ENCODE measurements at regions of chr11 and their contacts with region 1.

Region 1: GRCh38 chr11:95790123-95790932 is at the start of gene CEP57:
- DNase-seq: peak; percentile 93 to 96
- ATAC-seq: peak; percentile 89 to 92
- H3K4me3 ChIP-seq: peak within 1 kb of the TSS; percentile 88 to 99 (median 96)
- H3K27ac ChIP-seq: peak within 1 kb of the TSS; percentile 95 to 98 (median 96)
- H3K4me1 ChIP-seq: peaks cover 19 to 26% of the 10 kb centered on the region in 2 donors
- H3K27me3 ChIP-seq: no peaks in the 10 kb centered on the region
- CTCF ChIP-seq: no peak
- POLR2A ChIP-seq: peak; percentile 50 to 59
- total RNA-seq, gene CEP57: 10.2 to 20.5 (median 16.9) TPM

Region 2: DNA sequence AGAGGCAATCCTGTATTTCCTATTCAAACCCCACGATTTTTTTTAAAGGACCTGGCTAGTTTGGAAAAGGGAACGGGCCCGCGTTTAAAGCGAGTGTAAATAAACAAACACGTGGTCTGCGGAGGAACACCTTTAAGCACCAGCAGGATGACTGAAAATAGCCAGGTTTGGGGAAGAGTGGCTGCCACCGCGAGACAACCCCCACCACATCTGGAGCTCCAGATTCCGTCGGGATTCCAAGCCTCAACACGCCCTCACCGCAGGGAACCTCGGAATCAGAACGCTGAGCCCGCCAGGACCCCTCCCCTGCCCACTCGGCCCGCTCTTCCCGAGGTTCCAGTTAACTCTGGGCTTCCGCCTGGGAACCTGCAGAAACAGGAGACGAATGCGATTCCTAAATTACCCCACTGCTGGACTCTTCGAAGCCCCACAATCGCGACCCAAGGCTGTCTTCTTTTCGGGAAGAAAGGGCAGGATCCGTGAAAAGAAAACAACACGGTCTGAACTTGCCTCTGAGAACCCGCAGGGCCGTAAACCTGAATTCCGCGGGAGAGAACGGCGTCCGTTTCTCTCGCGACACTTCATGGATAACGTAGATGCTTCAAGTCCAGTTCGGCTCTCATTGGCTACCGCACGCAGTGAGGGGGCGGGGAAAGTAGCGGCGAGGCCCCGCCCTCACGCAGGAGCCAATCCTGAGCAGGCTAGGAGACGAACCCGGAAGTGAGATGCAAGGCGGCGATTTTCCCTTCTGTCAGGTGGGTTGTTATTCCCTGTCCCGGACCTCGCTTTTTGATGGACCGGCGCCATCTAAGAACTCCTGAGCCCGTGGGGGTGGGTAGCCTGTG is 1296.8 kb before region 1 on chr11 and contains the starts of genes ANKRD49 and MRE11:
- in situ Hi-C with region 1: loop called in 2 of 4 experiments (anchors 25 kb)
- intact Hi-C with region 1: no loop called
- DNase-seq: peak; percentile 96 to 98
- ATAC-seq: peak; percentile 100
- H3K4me3 ChIP-seq: peak within 1 kb of the TSS; percentile 80 to 94 (median 86)
- H3K27ac ChIP-seq: peak within 1 kb of the TSS; percentile 76 to 87 (median 82)
- H3K4me1 ChIP-seq: peaks cover 24 to 27% of the 10 kb centered on the region in 2 donors
- H3K27me3 ChIP-seq: no peaks in the 10 kb centered on the region
- CTCF ChIP-seq: no peak
- POLR2A ChIP-seq: peak; percentile 53 to 74
- total RNA-seq, gene ANKRD49: 9.0 to 21.1 (median 11.9) TPM
- total RNA-seq, gene MRE11: 5.3 to 12.3 (median 5.9) TPM

Region 3: GRCh38 chr11:95835768-95836488 is 45.6 kb after region 1 on chr11:
- in situ Hi-C with region 1: no loop called
- intact Hi-C with region 1: loop called (anchors 2 kb)
- DNase-seq: peak; percentile 19 to 57
- ATAC-seq: peak; percentile 92 to 99
- H3K4me3 ChIP-seq: no peak overlapping the region
- H3K27ac ChIP-seq: peak overlapping the region in 3 of 4 donors; percentile 5 to 22 (median 15)
- H3K4me1 ChIP-seq: peaks cover 0 to 8% of the 10 kb centered on the region in 2 donors
- H3K27me3 ChIP-seq: no peaks in the 10 kb centered on the region
- CTCF ChIP-seq: peak; percentile 61 to 87 (median 74)
- POLR2A ChIP-seq: no peak

Region 4: GRCh38 chr11:95923728-95924413 is 133.5 kb after region 1 on chr11 and contains the start of gene MTMR2:
- in situ Hi-C with region 1: no loop called
- intact Hi-C with region 1: loop called (anchors 5 kb)
- DNase-seq: peak; percentile 54 to 66
- ATAC-seq: peak; percentile 91 to 92
- H3K4me3 ChIP-seq: peak within 1 kb of the TSS; percentile 75 to 97 (median 87)
- H3K27ac ChIP-seq: peak within 1 kb of the TSS; percentile 91 to 93 (median 92)
- H3K4me1 ChIP-seq: peaks cover 10 to 18% of the 10 kb centered on the region in 2 donors
- H3K27me3 ChIP-seq: no peaks in the 10 kb centered on the region
- CTCF ChIP-seq: no peak
- POLR2A ChIP-seq: peak; percentile 51 to 67
- total RNA-seq, gene MTMR2: 4.0 to 5.3 (median 4.5) TPM

Region 5: DNA sequence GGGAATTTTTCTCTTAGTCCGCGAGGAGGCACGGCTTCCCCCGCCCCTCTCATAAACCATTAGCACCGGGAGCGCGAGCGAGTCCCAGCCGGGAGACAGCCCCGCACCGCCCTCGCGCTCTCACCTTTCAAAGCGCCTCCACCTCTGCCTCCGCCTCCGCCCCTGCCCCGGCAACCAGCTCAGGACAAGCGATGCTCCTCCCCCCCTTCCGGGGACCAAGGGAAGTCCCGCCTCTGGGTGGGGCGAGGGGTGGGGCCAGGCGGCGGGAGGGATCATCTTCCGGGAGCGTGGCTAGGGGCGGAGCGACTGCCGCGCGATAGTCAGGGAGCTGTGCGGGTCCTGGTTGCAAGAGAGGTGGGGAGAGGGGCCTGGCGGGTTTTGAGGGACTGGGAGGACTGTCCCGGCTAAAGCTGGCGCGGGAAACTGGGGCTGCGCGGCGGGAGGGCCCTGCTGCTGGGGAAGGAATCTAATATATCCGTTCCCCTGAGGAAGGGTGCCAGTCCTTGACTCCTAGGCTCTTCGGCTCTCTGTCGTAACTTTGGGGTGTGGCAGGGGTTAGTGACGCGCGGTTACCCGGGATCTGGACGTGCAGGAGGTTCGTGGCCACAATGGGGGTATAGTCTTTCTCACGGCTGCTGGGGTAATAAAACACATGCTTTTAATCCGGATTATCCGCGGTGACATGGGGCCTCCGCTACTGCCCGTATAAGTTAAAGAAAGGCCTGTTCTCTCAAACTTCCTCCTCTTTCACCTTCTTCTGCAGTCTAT is 599.6 kb after region 1 on chr11 and contains the starts of genes CCDC82 and JRKL:
- in situ Hi-C with region 1: no loop called
- intact Hi-C with region 1: loop called (anchors 1 kb)
- DNase-seq: peak; percentile 95 to 96
- ATAC-seq: peak; percentile 94 to 95
- H3K4me3 ChIP-seq: peak within 1 kb of the TSS; percentile 81 to 93 (median 92)
- H3K27ac ChIP-seq: peak within 1 kb of the TSS; percentile 87 to 95 (median 91)
- H3K4me1 ChIP-seq: peaks cover 14 to 19% of the 10 kb centered on the region in 2 donors
- H3K27me3 ChIP-seq: no peaks in the 10 kb centered on the region
- CTCF ChIP-seq: no peak
- POLR2A ChIP-seq: peak; percentile 89 to 90
- total RNA-seq, gene CCDC82: 4.6 to 9.1 (median 6.6) TPM
- total RNA-seq, gene JRKL: 2.9 to 5.8 (median 3.6) TPM